GM23248 (cell line): ENCODE measurements at regions of chr5 and their contacts with region 1.

Region 1: DNA sequence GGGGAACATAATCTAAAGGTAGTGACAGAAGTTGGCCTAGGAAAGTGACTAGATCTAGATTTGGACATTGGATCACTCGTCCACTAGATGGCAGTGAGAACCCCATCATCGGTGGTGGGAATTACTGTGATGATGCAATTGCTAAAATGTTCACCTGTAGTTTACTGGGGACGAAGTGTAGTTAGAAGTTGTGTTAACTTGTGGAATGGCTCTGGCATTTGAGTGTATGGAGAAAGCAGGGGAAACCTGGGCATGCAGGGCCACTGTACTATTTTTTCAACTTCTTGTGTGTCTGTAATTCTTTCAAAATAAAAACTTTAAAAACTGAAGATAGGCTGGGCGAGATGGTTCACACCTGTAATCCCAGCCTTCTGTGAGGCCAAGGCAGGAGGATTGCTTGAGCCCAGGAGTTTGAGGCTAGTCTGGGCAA is 75.5 kb downstream of the PHAX start:
- DNase-seq: peak; percentile 72
- H3K4me3 ChIP-seq: no peak overlapping the region
- H3K27ac ChIP-seq: no peak overlapping the region
- H3K4me1 ChIP-seq: peaks cover 13% of the 10 kb centered on the region
- H3K27me3 ChIP-seq: no peaks in the 10 kb centered on the region

Region 2: GRCh38 chr5:126354012-126354857 is 322.0 kb before region 1 on chr5:
- in situ Hi-C with region 1: no loop called
- DNase-seq: peak; percentile 96
- H3K4me3 ChIP-seq: peak overlapping the region; percentile 71
- H3K27ac ChIP-seq: peak overlapping the region; percentile 95
- H3K4me1 ChIP-seq: peaks cover 55% of the 10 kb centered on the region
- H3K27me3 ChIP-seq: no peaks in the 10 kb centered on the region

Region 3: DNA sequence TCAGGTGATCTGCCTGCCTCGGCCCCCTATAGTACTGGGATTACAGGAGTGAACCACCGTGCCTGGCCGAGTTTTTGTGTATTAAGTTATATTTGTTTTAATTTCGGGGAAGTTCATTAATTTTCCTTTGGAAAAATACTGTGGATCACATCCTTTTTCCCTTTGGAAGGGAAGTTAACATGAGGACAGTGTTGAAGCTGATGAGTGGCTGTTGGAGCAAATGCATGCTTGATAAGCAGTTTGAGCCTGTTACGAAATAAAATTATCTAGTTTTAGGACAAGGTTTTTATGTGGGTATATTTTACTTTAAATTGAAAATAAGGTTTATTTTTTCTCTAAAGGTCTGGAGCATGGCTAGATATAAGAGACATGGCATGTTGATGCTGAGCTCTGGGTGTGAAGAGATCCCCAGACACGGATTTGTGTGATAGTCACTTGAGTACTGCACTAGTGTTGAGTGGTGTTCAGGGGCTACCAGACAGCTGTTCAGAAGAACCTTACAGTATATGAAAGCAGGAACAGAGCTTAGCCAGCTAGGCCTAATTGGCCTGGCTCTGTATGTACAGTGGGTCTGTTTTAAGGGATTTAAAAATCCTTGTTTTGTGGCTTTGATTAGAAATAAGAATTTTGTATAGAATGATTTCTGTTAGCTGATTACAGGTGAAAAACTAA is 118.1 kb after region 1 on chr5:
- in situ Hi-C with region 1: loop called (anchors 5 kb)
- DNase-seq: no peak
- H3K4me3 ChIP-seq: no peak overlapping the region
- H3K27ac ChIP-seq: no peak overlapping the region
- H3K4me1 ChIP-seq: no peaks in the 10 kb centered on the region
- H3K27me3 ChIP-seq: no peaks in the 10 kb centered on the region